ENCODE measurements at regions of chr12 and their contacts with region 1.

Region 1: GRCh38 chr12:6335451-6336078 is 6.3 kb downstream of the TNFRSF1A start:
- DNase-seq: peak; percentile 96
- H3K4me3 ChIP-seq: peak overlapping the region; percentile 17 to 97 (median 88)
- H3K27ac ChIP-seq: peak overlapping the region; percentile 86 to 99 (median 96)
- H3K4me1 ChIP-seq: peaks cover 69 to 100% (median 91%) of the 10 kb centered on the region in 6 donors
- H3K27me3 ChIP-seq: peaks cover 0 to 76% (median 0%) of the 10 kb centered on the region in 7 donors
- CTCF ChIP-seq: peak in 10 of 11 experiments; percentile 38 to 74 (median 58)
- POLR2A ChIP-seq: no peak

Region 2: GRCh38 chr12:6470375-6471163 is 135.0 kb after region 1 on chr12 and contains the start of gene VAMP1:
- intact Hi-C with region 1: loop called (anchors 10 kb)
- DNase-seq: peak; percentile 99
- H3K4me3 ChIP-seq: peak within 1 kb of the TSS; percentile 64 to 94 (median 79)
- H3K27ac ChIP-seq: peak within 1 kb of the TSS; percentile 89 to 97 (median 91)
- H3K4me1 ChIP-seq: peaks cover 27 to 59% (median 52%) of the 10 kb centered on the region in 6 donors
- H3K27me3 ChIP-seq: no peaks in the 10 kb centered on the region
- CTCF ChIP-seq: peak in 8 of 11 experiments; percentile 14 to 56 (median 26)
- POLR2A ChIP-seq: peak; percentile 96 to 100 (median 98)
- total RNA-seq, gene VAMP1: 18.5 to 32.5 (median 24.2) TPM

Region 3: GRCh38 chr12:6540181-6540877 is 204.8 kb after region 1 on chr12:
- intact Hi-C with region 1: loop called (anchors 10 kb)
- DNase-seq: peak; percentile 92
- H3K4me3 ChIP-seq: peak overlapping the region in 4 of 8 donors; percentile 2 to 50 (median 15)
- H3K27ac ChIP-seq: peak overlapping the region; percentile 58 to 98 (median 74)
- H3K4me1 ChIP-seq: peaks cover 50 to 80% (median 76%) of the 10 kb centered on the region in 6 donors
- H3K27me3 ChIP-seq: no peaks in the 10 kb centered on the region
- CTCF ChIP-seq: no peak
- POLR2A ChIP-seq: no peak